Right ventricle myocardium inferior (tissue), 1 donor: ENCODE measurements at regions of chr11 and their contacts with region 1.

Region 1: GRCh38 chr11:111707039-111707690 is 59.0 kb downstream of the PPP2R1B start:
- DNase-seq: no peak
- ATAC-seq: peak; percentile 78

Region 2: DNA sequence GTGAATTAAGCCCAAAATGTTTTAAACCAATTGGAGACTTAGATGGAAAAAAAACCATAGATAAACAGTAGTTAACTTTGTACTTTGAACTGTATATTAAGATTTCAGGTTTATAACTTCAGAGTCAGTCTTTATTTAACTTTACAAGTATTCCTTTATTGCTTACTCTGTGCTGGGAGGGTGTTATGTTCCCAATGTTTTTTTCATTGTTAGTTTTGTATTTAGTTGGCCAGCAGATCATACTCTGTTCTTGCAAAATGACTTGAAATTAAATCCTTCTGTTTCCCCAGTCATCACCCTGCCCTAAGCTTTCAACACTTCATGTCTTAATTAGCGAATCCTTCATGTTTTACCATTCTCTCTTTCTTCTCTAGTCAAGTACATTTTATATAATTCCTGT is 79.6 kb before region 1 on chr11:
- intact Hi-C with region 1: loop called (anchors 5 kb)
- DNase-seq: no peak
- ATAC-seq: peak; percentile 57

Region 3: DNA sequence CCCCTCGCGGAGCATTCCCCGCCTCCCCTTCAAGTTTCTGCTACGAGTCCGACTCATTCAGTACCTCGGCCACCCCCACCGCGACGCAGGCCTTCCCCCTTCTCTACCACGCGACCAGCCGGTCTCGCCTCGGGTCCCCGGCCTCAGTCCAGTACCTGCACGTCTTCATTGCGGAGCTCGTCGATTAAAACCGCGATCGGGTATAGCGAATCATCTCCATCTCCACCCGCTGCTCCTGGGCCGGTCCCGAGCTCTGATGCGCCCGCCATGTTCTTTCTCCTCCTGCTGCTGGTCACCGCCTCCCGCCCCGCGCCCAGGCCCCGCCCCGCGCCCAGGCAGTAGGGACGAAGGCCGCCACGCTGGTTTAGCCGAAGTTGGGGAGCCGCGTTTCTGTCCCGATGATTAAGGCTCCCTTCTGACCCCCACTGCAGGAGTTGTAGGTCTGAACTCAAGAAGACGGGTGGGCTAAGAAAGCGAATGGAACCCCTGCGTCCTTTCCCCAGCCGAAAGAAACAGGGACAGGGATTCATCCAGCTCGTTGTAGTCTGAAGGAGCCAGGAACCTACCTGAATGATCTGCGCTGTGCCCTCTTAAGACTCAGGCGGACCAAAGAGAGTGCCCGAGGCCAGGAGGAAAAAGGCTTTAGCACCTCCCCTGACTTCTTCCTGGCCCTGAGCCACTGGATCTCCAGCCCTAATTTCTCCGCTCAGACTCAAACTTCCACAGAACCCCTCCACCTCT is 59.1 kb after region 1 on chr11 and contains the start of gene PPP2R1B:
- intact Hi-C with region 1: loop called (anchors 5 kb)
- DNase-seq: peak; percentile 89
- ATAC-seq: peak; percentile 97
- total RNA-seq, gene PPP2R1B: 7.8 TPM